Activated CD8-positive, alpha-beta memory T cell treated with anti-CD3 and anti-CD28 coated beads, Interleukin-2, amount 10 ng/mL, durations not matched to agents 7 days and 5 days (primary cell): ENCODE measurements at regions of chr4 and their contacts with region 1.

Region 1: GRCh38 chr4:102610007-102610406 is 108.8 kb downstream of the NFKB1 start:
- DNase-seq: no peak
- ATAC-seq: no peak
- H3K4me3 Mint-ChIP-seq: no peak overlapping the region
- H3K27ac Mint-ChIP-seq: peak overlapping the region; percentile 33
- H3K4me1 Mint-ChIP-seq: peaks cover 85% of the 10 kb centered on the region
- H3K27me3 Mint-ChIP-seq: no peaks in the 10 kb centered on the region

Region 2: GRCh38 chr4:102447413-102447812 is 162.6 kb before region 1 on chr4:
- CTCF ChIA-PET with region 1: interaction called, 15 read pairs
- DNase-seq: peak; percentile 52
- ATAC-seq: peak; percentile 74
- H3K4me3 Mint-ChIP-seq: peak overlapping the region; percentile 7
- H3K27ac Mint-ChIP-seq: peak overlapping the region; percentile 64
- H3K4me1 Mint-ChIP-seq: peaks cover 33% of the 10 kb centered on the region
- H3K27me3 Mint-ChIP-seq: no peaks in the 10 kb centered on the region

Region 3: DNA sequence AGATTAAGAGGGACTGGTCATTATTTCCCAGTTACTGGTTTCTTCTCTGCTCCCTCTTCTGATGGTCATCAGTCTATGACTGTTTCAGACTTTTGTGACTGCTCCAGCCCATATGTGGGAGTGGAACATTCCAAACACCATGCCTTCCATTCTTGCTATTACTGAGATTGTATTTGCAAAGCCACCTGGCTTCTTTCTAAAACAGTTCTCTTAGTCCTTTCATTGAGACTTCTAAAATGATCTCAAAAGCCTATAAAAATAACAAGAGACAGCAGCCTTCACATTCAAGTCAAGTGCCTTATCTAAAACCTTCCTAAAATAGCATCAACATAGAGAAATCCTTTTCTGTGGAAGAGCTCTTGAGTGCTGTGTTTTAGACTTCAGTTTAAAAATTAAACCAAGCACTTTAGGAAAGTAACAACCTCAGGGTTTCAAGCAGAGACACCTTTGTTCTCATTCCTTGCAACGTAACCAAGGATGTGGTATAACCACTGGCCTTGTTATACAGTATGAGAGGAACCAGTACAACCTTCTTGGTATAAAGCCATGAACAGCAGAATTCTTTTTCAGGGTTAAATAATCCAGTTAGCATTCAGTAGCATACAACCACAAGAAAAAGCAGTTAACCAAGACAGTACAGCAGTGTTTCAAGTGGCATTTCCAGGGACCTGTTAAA is 11.8 kb before region 1 on chr4:
- CTCF ChIA-PET with region 1: interaction called, 21 read pairs
- DNase-seq: peak; percentile 66
- ATAC-seq: peak; percentile 87
- H3K4me3 Mint-ChIP-seq: peak overlapping the region; percentile 54
- H3K27ac Mint-ChIP-seq: peak overlapping the region; percentile 91
- H3K4me1 Mint-ChIP-seq: peaks cover 68% of the 10 kb centered on the region
- H3K27me3 Mint-ChIP-seq: no peaks in the 10 kb centered on the region